PC-9 (cell line): ENCODE measurements at regions of chr3 and their contacts with region 1.

Region 1: DNA sequence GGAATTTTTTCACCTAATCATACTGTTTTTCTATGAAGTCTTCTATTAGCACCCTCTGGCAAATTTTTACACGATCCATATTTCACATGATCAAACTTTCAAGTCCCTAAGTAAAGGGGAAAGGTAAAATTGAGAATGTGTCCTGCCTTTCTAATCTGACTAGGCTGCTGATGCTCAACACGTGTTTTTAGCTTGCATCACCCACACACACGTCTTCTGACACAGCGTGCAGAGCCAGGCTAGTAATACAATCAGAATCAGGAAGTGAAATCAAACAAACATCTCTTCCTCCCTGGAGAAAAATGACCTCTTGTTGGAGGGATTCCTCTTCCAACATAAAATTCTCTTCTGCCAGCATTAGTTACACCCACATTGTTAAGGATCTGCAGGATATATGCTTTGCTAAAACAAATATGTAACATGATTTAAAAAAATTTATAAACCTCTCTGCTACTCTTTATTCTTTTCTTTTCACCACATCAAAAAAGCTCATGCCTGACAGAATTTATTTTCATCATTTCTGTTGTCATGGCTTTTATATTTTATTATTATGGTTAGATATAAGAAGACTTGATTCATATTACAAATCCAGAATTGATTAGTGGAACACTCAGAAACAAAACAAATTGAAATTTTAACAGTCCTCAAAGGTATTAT is 122.4 kb downstream of the RAP2B start:
- DNase-seq: peak; percentile 62 to 66
- H3K4me3 ChIP-seq: no peak overlapping the region
- H3K27ac ChIP-seq: peak overlapping the region; percentile 38
- H3K4me1 ChIP-seq: peaks cover 22% of the 10 kb centered on the region
- H3K27me3 ChIP-seq: no peaks in the 10 kb centered on the region
- CTCF ChIP-seq: no peak

Region 2: GRCh38 chr3:153221748-153222162 is 62.7 kb before region 1 on chr3:
- CTCF ChIA-PET with region 1: no interaction called
- POLR2A ChIA-PET with region 1: no interaction called
- intact Hi-C with region 1: loop called (anchors 5 kb)
- DNase-seq: peak; percentile 72 to 92
- H3K4me3 ChIP-seq: no peak overlapping the region
- H3K27ac ChIP-seq: peak overlapping the region; percentile 59
- H3K4me1 ChIP-seq: peaks cover 19% of the 10 kb centered on the region
- H3K27me3 ChIP-seq: no peaks in the 10 kb centered on the region
- CTCF ChIP-seq: no peak

Region 3: GRCh38 chr3:153232910-153233271 is 51.5 kb before region 1 on chr3:
- CTCF ChIA-PET with region 1: no interaction called
- POLR2A ChIA-PET with region 1: no interaction called
- intact Hi-C with region 1: no loop called
- DNase-seq: no peak
- H3K4me3 ChIP-seq: no peak overlapping the region
- H3K27ac ChIP-seq: no peak overlapping the region
- H3K4me1 ChIP-seq: 0 out of 2 replicates have a peak, but pooled peaks cover 5% of the 10 kb centered on the region
- H3K27me3 ChIP-seq: no peaks in the 10 kb centered on the region
- CTCF ChIP-seq: no peak

Region 4: DNA sequence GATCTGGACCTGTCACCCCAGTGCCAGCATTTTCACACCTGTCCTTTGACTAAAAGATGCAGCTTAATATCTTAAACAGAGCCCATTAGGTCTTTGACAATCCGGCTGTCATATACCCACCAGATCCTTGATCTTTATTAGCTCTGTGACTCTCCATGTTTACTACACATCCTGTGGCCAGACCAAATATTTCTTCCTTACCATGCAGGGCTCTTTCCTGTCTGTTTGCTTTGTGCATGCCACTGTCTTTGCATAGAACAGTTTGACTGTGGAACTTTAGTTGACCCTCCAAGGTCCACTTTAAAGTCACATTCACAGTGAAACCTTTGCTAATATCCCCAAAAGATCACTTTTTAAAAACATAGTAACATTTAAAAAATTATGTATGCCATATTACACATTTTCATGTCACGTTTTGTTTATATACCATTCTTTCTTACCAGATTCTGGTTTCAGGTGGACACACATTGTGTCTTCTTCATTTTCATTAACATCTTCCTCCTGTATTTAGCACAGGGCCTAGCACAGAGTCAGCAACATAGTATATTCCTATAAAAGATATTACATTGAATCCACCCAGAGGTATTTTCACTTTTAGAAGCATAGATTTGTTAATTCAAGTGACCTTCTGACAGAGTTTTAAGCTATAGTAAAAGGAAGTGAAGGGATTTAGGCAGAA is 26.6 kb before region 1 on chr3:
- CTCF ChIA-PET with region 1: no interaction called
- POLR2A ChIA-PET with region 1: interaction called, 4 read pairs
- intact Hi-C with region 1: loop called (anchors 2 kb)
- DNase-seq: no peak
- H3K4me3 ChIP-seq: no peak overlapping the region
- H3K27ac ChIP-seq: no peak overlapping the region
- H3K4me1 ChIP-seq: no peaks in the 10 kb centered on the region
- H3K27me3 ChIP-seq: no peaks in the 10 kb centered on the region
- CTCF ChIP-seq: no peak